Heart right ventricle (tissue), 16 donors: ENCODE measurements at regions of chr12 and their contacts with region 1.

Region 1: DNA sequence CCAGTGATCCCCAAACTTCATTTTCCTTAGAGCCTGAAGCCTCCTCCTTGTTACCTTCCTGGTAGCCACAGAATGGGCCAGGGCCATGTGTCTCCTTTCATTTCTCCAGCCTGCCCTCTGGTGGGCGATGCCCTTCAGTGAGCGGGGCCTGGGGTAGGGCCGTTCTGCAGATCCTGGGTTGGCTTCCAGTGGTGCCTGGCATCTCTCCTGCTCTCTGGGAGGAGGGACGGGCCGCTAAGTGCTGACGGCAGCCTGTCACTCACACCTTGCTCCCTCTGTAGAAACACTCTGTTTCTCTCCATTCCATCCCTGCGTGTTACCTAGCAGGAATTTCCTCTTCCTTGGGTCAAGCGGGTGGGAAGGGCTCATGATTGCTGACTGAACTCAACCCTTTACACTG is 232.1 kb downstream of the CACNA1C start:
- DNase-seq: peak; percentile 85 to 86
- ATAC-seq: peak; percentile 59 to 87 (median 81)
- H3K4me3 ChIP-seq: no peak overlapping the region
- H3K27ac ChIP-seq: peak overlapping the region in 9 of 10 donors; percentile 50 to 76 (median 70)
- H3K4me1 ChIP-seq: peaks cover 40 to 87% (median 80%) of the 10 kb centered on the region in 9 donors
- H3K27me3 ChIP-seq: no peaks in the 10 kb centered on the region
- CTCF ChIP-seq: peak; percentile 29 to 74 (median 69)

Region 2: GRCh38 chr12:1804545-1805332 is 480.1 kb before region 1 on chr12:
- intact Hi-C with region 1: loop called in 3 of 10 experiments (anchors 10 kb)
- DNase-seq: peak; percentile 86 to 93
- ATAC-seq: peak; percentile 51 to 92 (median 86)
- H3K4me3 ChIP-seq: no peak overlapping the region
- H3K27ac ChIP-seq: peak overlapping the region in 6 of 10 donors; percentile 19 to 77 (median 42)
- H3K4me1 ChIP-seq: peaks cover 3 to 34% (median 14%) of the 10 kb centered on the region in 9 donors
- H3K27me3 ChIP-seq: no peaks in the 10 kb centered on the region
- CTCF ChIP-seq: no peak

Region 3: DNA sequence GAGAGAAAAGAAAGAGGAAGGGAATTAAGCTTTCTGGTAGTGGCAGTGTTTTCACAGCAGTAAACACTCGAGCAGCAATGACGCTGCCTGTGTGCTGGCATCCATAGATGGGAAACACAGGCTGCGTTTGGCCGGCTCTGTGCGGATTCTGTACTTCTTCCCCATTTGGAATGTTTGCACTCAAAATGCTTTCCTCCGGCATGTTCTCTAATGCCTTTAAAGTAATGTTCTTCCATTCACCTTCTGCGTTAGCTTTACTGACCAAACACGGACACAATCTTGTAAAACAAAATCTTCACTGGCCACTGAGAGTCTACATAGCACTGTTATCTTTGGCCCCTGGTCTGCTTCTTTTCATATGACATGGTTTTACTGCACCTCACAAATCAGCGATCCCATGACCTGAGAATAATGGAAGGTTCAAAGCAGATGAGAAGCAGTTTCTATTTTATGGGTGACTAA is 312.0 kb before region 1 on chr12:
- intact Hi-C with region 1: loop called in 4 of 10 experiments (anchors 5 to 10 kb)
- DNase-seq: peak; percentile 24 to 44
- ATAC-seq: peak; percentile 61 to 83 (median 74)
- H3K4me3 ChIP-seq: peak overlapping the region in 9 of 10 donors; percentile 27 to 58 (median 49)
- H3K27ac ChIP-seq: peak overlapping the region; percentile 70 to 94 (median 84)
- H3K4me1 ChIP-seq: peaks cover 0 to 44% (median 15%) of the 10 kb centered on the region in 9 donors
- H3K27me3 ChIP-seq: no peaks in the 10 kb centered on the region
- CTCF ChIP-seq: no peak

Region 4: DNA sequence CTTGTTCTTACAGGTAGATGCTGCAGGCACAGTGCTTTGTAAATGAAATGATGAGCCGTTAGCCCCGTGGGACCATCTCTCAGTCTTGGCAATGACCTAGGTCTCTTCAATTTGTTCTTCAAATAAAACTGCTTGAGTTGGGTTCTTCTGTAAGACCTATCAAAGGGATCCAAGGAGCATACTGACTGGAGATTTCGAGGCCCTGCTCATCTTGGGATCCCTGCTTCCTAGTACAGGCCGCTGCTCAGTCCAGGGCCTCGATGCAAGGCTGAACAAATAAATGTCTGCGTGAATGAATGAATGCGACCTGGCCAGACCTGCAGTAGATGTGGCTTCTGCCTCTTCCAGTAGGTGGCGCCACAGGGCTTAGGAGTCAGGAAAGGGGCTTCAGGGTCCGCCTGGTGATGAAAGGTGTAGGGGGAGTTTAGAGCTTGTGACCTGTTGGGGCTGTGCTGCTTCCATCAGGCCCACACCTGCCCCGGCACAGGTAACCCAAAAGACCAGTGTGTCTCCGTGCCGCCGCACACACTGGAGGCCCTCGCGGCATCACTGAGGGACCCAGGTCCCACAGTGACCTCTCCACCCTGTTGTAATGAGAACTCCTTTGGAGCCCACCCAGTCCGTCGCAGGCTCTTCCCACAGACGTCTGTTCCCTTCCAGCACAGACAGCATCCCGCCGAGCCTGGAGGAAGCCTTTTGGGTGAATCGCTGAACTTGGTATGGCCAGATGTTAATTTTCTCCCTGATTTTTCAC is 227.6 kb before region 1 on chr12:
- intact Hi-C with region 1: loop called in 6 of 10 experiments (anchors 5 to 10 kb)
- DNase-seq: peak; percentile 66 to 69
- ATAC-seq: peak in 6 of 8 donors; percentile 9 to 37 (median 23)
- H3K4me3 ChIP-seq: peak overlapping the region in 3 of 10 donors; percentile 5 to 9 (median 8)
- H3K27ac ChIP-seq: peak overlapping the region in 8 of 10 donors; percentile 17 to 68 (median 46)
- H3K4me1 ChIP-seq: peaks cover 5 to 85% (median 43%) of the 10 kb centered on the region in 9 donors
- H3K27me3 ChIP-seq: peaks cover 0 to 37% (median 0%) of the 10 kb centered on the region in 7 donors
- CTCF ChIP-seq: peak; percentile 55 to 80 (median 73)

Region 5: GRCh38 chr12:2244013-2244861 is 40.6 kb before region 1 on chr12:
- intact Hi-C with region 1: loop called in 1 of 10 experiments (anchors 5 kb)
- DNase-seq: no peak
- ATAC-seq: peak in 7 of 8 donors; percentile 14 to 64 (median 41)
- H3K4me3 ChIP-seq: no peak overlapping the region
- H3K27ac ChIP-seq: peak overlapping the region in 9 of 10 donors; percentile 28 to 72 (median 56)
- H3K4me1 ChIP-seq: peaks cover 34 to 98% (median 68%) of the 10 kb centered on the region in 9 donors
- H3K27me3 ChIP-seq: no peaks in the 10 kb centered on the region
- CTCF ChIP-seq: no peak

Region 6: DNA sequence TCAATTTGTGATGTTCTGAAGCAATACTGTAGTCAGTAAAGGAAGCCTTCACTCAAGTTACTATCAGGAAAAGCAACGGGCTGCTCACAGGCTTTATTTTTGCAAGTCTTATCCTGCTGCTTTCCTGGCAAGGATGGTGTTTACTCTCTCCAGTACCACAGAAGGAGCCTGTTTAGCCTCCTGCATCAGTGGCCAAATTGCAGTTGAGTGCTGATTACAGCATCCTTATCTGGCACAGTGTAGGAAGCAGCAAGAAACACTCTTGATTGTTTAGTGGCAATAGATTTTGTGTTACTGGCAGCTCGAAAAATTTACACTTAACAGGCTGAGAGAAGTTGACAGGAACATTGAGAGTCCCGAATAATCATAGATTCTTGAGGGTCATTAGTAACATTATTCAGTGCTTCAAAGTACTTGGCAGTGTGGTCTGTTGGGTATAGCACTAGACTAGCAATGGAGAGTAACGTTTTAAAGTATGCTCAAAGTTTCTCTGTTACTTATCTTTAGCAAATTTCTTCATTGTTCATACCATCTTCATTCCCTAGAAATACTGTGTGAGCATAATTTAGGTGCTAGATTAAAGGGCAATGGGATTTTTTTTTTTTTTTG is 617.5 kb after region 1 on chr12:
- intact Hi-C with region 1: no loop called
- DNase-seq: peak in 1 of 2 donors; percentile 59
- ATAC-seq: peak; percentile 78 to 96 (median 88)
- H3K4me3 ChIP-seq: no peak overlapping the region
- H3K27ac ChIP-seq: peak overlapping the region in 2 of 10 donors; percentile 6
- H3K4me1 ChIP-seq: peaks cover 0 to 12% (median 9%) of the 10 kb centered on the region in 9 donors
- H3K27me3 ChIP-seq: no peaks in the 10 kb centered on the region
- CTCF ChIP-seq: no peak